Right lobe of liver (tissue), 6 donors: ENCODE measurements at regions of chr17 and their contacts with region 1.

Region 1: DNA sequence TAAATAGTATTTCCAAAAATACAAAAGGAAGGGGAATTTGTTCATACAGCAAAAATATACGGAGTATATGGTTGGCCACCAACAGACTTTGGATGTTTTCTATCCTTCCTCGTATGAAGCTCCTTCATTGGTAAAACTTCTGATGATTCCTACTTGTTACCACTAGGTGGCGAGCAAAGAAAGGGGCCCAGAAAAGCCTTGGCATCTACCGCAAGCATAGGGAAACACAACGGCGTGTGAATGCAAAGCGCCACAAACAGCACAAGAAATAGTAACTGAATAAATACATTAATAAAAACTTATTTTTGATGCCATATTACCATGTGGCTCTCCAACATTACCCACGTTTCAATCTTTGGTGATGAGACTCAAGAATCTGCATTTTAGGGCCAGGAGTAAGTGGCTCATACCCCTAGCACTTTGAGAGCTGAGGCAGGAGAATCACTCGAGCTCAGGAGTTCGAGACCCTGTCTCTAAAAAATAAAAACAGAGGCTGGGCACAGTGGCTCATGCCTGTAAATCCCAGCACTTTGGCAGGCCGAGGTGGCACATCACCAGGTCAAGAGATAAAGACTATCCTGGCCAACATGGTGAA is 34.5 kb downstream of the YWHAE start:
- DNase-seq: peak in 1 of 3 donors; percentile 64
- ATAC-seq: peak; percentile 80 to 88 (median 82)
- H3K4me3 ChIP-seq: no peak overlapping the region
- H3K27ac ChIP-seq: peak overlapping the region in 1 of 3 donors; percentile 7
- H3K4me1 ChIP-seq: peaks cover 0 to 56% (median 10%) of the 10 kb centered on the region in 4 donors
- H3K27me3 ChIP-seq: no peaks in the 10 kb centered on the region
- CTCF ChIP-seq: peak; percentile 83 to 86 (median 84)
- POLR2A ChIP-seq: no peak

Region 2: GRCh38 chr17:1447052-1447451 is 81.5 kb after region 1 on chr17:
- intact Hi-C with region 1: loop called (anchors 10 kb)
- DNase-seq: no peak
- ATAC-seq: peak; percentile 52 to 75 (median 64)
- H3K4me3 ChIP-seq: no peak overlapping the region
- H3K27ac ChIP-seq: peak overlapping the region in 1 of 3 donors; percentile 18
- H3K4me1 ChIP-seq: no peaks in the 10 kb centered on the region
- H3K27me3 ChIP-seq: no peaks in the 10 kb centered on the region
- CTCF ChIP-seq: no peak
- POLR2A ChIP-seq: no peak

Region 3: DNA sequence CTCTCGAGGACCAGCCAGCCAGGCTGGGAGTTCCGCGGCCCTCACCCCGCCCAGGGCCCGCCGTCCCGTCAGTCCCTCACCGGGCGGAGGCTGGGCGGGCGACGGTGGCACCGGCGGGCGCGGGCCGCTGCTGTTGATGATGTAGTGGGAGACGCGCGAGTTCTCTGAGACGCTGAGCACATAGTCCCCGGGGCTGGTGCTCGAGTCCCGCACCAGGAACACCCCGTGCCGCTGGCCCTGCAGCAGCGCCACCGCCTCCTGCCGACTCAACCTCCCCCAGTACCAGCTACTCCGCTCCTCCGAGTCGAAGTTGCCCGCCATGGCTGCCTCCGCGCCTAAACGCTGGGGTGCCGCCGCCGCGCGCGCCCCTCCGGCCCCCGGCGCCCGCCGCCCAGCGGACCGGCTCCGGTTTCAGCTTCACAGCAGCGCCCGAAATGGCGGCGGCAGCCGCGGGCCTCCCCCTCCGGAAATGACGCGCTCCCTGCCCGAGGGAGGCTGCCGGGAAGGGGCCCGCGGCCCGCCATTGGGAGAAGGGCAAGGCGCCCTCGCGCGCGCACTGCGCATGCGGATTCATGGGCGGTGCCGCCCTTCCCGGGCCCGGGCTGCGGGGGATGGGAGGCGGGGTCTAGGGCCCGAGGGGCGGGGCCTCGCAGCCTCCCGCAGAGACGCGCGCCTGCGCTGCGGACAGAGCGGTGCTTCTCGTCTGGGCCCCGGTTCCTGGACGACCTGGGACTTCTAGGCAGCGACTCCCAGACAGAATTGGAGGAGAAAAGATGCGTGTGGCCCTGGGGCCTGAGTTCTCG is 90.5 kb after region 1 on chr17 and contains the start of gene CRK:
- intact Hi-C with region 1: loop called in 1 of 2 experiments (anchors 10 kb)
- DNase-seq: peak; percentile 97 to 99 (median 99)
- ATAC-seq: peak; percentile 81 to 91 (median 84)
- H3K4me3 ChIP-seq: peak within 1 kb of the TSS; percentile 93 to 98 (median 98)
- H3K27ac ChIP-seq: peak within 1 kb of the TSS; percentile 97 to 98 (median 98)
- H3K4me1 ChIP-seq: peaks cover 0 to 63% (median 19%) of the 10 kb centered on the region in 4 donors
- H3K27me3 ChIP-seq: no peaks in the 10 kb centered on the region
- CTCF ChIP-seq: no peak
- POLR2A ChIP-seq: peak; percentile 96
- total RNA-seq, gene CRK: 33.9 to 58.6 (median 47.6) TPM

Region 4: DNA sequence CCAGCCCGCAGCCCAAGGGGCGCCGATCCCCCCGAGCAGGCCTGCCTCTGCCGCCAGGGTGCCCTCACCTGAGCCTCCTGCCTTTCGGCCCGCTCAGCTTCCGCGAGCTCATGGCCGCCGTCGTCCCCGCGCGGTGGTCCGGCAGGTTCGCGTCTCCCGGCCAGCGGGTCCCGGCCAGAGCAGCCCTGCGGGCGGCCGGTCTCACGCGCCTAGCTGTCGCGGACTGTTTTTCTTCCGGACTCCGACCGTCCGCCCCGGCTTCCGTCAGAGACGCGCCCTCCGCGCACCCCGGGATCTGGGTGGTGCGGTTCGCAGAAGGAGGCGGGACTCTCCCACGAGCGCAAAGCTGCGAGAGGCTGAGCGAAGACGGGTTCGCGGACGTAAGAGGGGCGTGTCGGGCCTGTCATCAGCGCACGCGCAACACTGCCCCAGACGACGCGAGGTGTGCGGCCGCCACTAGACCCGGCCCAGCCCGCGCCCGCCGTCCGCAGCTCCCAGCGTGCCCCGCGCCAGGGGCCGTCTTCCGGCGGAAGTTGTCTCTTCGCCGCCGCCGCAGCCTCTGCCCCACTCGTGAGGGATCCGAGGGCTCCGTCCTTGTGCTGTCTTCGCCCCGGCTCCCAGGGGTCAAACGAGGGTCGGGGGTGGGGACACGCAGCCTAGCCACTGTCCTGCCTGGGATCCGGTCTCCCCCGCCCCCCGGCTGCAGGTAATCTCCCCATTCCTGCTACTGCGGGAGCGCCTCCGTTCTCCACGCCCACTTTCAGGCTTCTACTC is 151.0 kb after region 1 on chr17 and contains the start of gene INPP5K:
- intact Hi-C with region 1: loop called (anchors 10 kb)
- DNase-seq: peak; percentile 99
- ATAC-seq: peak; percentile 95 to 97 (median 96)
- H3K4me3 ChIP-seq: peak within 1 kb of the TSS; percentile 89 to 100 (median 94)
- H3K27ac ChIP-seq: peak within 1 kb of the TSS; percentile 78 to 88 (median 79)
- H3K4me1 ChIP-seq: peaks cover 0 to 19% (median 0%) of the 10 kb centered on the region in 4 donors
- H3K27me3 ChIP-seq: no peaks in the 10 kb centered on the region
- CTCF ChIP-seq: peak in 1 of 4 donors; percentile 7
- POLR2A ChIP-seq: peak; percentile 58
- total RNA-seq, gene INPP5K: 12.7 to 22.6 (median 18.2) TPM